Calu3 (cell line): ENCODE measurements at regions of chr2 and their contacts with region 1.

Region 1: GRCh38 chr2:102505290-102505689 is 32.3 kb downstream of the SLC9A4 start:
- DNase-seq: peak; percentile 61
- H3K4me3 Mint-ChIP-seq: no peak overlapping the region
- H3K27ac Mint-ChIP-seq: no peak overlapping the region
- H3K4me1 Mint-ChIP-seq: peaks cover 15% of the 10 kb centered on the region
- H3K27me3 Mint-ChIP-seq: no peaks in the 10 kb centered on the region
- CTCF ChIP-seq: no peak

Region 2: GRCh38 chr2:102424754-102425153 is 80.5 kb before region 1 on chr2:
- CTCF ChIA-PET with region 1: no interaction called
- intact Hi-C with region 1: no loop called
- DNase-seq: no peak
- H3K4me3 Mint-ChIP-seq: no peak overlapping the region
- H3K27ac Mint-ChIP-seq: no peak overlapping the region
- H3K4me1 Mint-ChIP-seq: no peaks in the 10 kb centered on the region
- H3K27me3 Mint-ChIP-seq: peaks cover 55% of the 10 kb centered on the region
- CTCF ChIP-seq: no peak

Region 3: GRCh38 chr2:102487761-102488466 is 17.4 kb before region 1 on chr2:
- CTCF ChIA-PET with region 1: interaction called, 10 read pairs
- intact Hi-C with region 1: no loop called
- DNase-seq: peak; percentile 70
- H3K4me3 Mint-ChIP-seq: no peak overlapping the region
- H3K27ac Mint-ChIP-seq: peak overlapping the region; percentile 73
- H3K4me1 Mint-ChIP-seq: peaks cover 17% of the 10 kb centered on the region
- H3K27me3 Mint-ChIP-seq: no peaks in the 10 kb centered on the region
- CTCF ChIP-seq: no peak